ENCODE measurements at regions of chr17 and their contacts with region 1.

Region 1: DNA sequence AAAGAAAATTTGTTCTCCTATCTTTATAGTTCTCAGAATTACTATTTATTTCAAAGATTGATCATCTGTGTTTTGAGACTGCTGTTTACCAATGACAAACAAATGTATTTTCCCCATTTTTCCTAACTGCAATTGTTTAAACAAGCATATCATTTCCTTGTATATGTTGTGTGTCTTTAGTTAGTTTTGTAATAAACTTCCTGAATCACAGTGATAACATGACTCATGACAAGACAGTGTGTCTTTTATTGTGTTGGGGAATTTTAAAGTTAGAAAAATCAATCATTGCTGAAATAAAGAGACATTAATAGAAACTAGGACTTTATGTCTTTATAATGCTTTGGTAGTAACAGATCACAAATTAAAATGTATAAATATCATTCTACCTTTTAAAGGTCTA is 348.5 kb downstream of the KCNJ2 start:
- DNase-seq: no peak
- ATAC-seq: no peak
- H3K4me3 ChIP-seq: no peak overlapping the region
- H3K27ac ChIP-seq: no peak overlapping the region
- H3K4me1 ChIP-seq: no peaks in the 10 kb centered on the region
- H3K27me3 ChIP-seq: no peaks in the 10 kb centered on the region
- CTCF ChIP-seq: no peak
- EP300 ChIP-seq: no peak
- POLR2A ChIP-seq: no peak
- RAD21 ChIP-seq: no peak

Region 2: GRCh38 chr17:69223809-69224208 is 1294.0 kb before region 1 on chr17:
- CTCF ChIA-PET with region 1: no interaction called
- POLR2A ChIA-PET with region 1: no interaction called
- in situ Hi-C with region 1: no loop called
- intact Hi-C with region 1: loop called (anchors 10 kb)
- DNase-seq: peak; percentile 69
- ATAC-seq: peak; percentile 58
- H3K4me3 ChIP-seq: no peak overlapping the region
- H3K27ac ChIP-seq: no peak overlapping the region
- H3K4me1 ChIP-seq: peaks cover 35% of the 10 kb centered on the region
- H3K27me3 ChIP-seq: no peaks in the 10 kb centered on the region
- CTCF ChIP-seq: no peak
- EP300 ChIP-seq: peak in 1 of 2 experiments; percentile 47; a peak in 1 of 4 replicates
- POLR2A ChIP-seq: no peak
- RAD21 ChIP-seq: no peak

Region 3: GRCh38 chr17:70365091-70365583 is 152.7 kb before region 1 on chr17:
- CTCF ChIA-PET with region 1: no interaction called
- POLR2A ChIA-PET with region 1: no interaction called
- in situ Hi-C with region 1: no loop called
- intact Hi-C with region 1: no loop called
- DNase-seq: no peak
- ATAC-seq: no peak
- H3K4me3 ChIP-seq: no peak overlapping the region
- H3K27ac ChIP-seq: no peak overlapping the region
- H3K4me1 ChIP-seq: no peaks in the 10 kb centered on the region
- H3K27me3 ChIP-seq: no peaks in the 10 kb centered on the region
- CTCF ChIP-seq: no peak
- EP300 ChIP-seq: no peak
- POLR2A ChIP-seq: no peak
- RAD21 ChIP-seq: no peak